MCF 10A (cell line): ENCODE measurements at regions of chr11 and their contacts with region 1.

Region 1: DNA sequence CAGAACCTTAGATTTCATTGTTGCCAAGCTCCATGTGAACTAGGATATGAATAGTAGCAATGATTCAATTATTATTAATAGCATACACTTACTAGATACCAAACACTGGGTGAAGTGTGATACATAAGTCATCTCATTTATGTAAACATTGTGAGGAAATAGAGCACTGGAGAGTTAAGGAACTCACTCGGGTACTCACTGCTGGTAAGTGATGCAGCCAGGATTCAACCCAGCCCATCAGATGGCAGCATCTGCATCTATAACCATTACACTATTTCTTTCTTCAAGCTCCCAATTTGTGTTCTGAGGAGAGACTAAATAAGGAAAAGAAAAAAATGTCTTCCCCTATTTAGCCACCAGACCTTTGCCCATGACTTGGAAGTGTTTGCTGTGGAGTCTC is 10.2 kb upstream of the ALG8 start:
- DNase-seq: peak; percentile 47
- H3K4me3 Mint-ChIP-seq: no peak overlapping the region
- H3K27ac Mint-ChIP-seq: no peak overlapping the region
- H3K4me1 Mint-ChIP-seq: no peaks in the 10 kb centered on the region
- H3K27me3 Mint-ChIP-seq: no peaks in the 10 kb centered on the region
- CTCF ChIP-seq: peak; percentile 22

Region 2: DNA sequence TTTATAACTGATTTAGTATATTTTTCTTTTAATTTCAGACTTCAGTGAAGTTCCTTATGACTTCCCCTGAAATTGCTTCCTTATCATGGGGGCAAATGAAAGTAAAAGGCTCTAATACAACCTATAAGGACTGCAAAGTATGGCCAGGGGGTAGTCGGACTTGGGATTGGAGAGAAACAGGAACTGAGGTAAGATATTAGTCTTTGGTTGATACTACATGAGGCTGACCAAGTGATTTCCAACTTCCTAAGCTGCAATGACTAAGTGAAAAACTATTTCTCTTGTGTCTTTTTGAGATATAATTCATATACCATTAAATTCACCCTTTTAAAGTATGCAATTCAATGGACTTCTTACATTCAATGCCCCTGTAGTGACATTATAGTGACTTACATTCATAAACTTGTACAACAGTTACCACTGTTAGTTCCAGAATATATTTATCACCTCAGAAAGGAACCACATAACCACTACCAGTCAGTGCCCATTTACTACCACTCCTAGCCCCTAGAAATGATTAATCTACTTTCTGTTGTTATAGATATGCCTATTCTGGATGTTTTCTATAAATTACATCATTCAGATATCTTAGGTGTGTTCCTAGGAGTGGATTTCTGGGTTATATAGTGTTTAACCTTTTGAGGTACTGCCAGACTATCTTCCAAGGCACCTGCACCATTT is 307.1 kb before region 1 on chr11:
- CTCF ChIA-PET with region 1: no interaction called
- POLR2A ChIA-PET with region 1: no interaction called
- intact Hi-C with region 1: no loop called
- DNase-seq: no peak
- H3K4me3 Mint-ChIP-seq: no peak overlapping the region
- H3K27ac Mint-ChIP-seq: no peak overlapping the region
- H3K4me1 Mint-ChIP-seq: no peaks in the 10 kb centered on the region
- H3K27me3 Mint-ChIP-seq: no peaks in the 10 kb centered on the region
- CTCF ChIP-seq: no peak

Region 3: GRCh38 chr11:78325274-78325781 is 175.7 kb after region 1 on chr11:
- CTCF ChIA-PET with region 1: no interaction called
- POLR2A ChIA-PET with region 1: no interaction called
- intact Hi-C with region 1: no loop called
- DNase-seq: no peak
- H3K4me3 Mint-ChIP-seq: no peak overlapping the region
- H3K27ac Mint-ChIP-seq: no peak overlapping the region
- H3K4me1 Mint-ChIP-seq: no peaks in the 10 kb centered on the region
- H3K27me3 Mint-ChIP-seq: no peaks in the 10 kb centered on the region
- CTCF ChIP-seq: no peak

Region 4: DNA sequence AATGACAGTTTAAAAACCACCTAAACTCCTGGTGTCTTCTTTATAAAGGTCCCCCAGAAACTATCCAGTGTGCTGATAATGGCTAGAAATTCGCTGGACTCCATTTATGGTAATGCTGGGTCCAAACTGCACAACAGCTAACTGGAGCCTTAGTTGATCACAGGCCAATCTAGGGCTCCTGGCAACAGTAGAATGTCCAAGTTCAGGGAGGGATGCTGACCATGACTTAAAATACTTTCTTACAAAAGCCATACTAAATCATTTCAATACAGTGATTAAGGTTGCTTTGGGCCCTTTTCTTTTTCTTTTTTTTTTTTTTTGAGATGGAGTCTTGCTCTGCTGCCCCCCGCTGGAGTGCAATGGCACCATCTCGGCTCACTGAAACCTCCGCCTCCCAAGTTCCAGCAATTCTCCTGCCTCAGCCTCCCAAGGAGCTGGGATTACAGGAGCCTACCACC is 282.4 kb after region 1 on chr11:
- CTCF ChIA-PET with region 1: no interaction called
- POLR2A ChIA-PET with region 1: no interaction called
- intact Hi-C with region 1: loop called (anchors 5 kb)
- DNase-seq: peak; percentile 30
- H3K4me3 Mint-ChIP-seq: no peak overlapping the region
- H3K27ac Mint-ChIP-seq: no peak overlapping the region
- H3K4me1 Mint-ChIP-seq: no peaks in the 10 kb centered on the region
- H3K27me3 Mint-ChIP-seq: no peaks in the 10 kb centered on the region
- CTCF ChIP-seq: peak; percentile 40